Calu3 (cell line): ENCODE measurements at regions of chr11 and their contacts with region 1.

Region 1: GRCh38 chr11:61129639-61130523 is 27.6 kb downstream of the CD5 start:
- DNase-seq: peak; percentile 95
- H3K4me3 Mint-ChIP-seq: peak overlapping the region; percentile 27
- H3K27ac Mint-ChIP-seq: peak overlapping the region; percentile 29
- H3K4me1 Mint-ChIP-seq: peaks cover 9% of the 10 kb centered on the region
- H3K27me3 Mint-ChIP-seq: peaks cover 10% of the 10 kb centered on the region
- CTCF ChIP-seq: peak; percentile 99

Region 2: DNA sequence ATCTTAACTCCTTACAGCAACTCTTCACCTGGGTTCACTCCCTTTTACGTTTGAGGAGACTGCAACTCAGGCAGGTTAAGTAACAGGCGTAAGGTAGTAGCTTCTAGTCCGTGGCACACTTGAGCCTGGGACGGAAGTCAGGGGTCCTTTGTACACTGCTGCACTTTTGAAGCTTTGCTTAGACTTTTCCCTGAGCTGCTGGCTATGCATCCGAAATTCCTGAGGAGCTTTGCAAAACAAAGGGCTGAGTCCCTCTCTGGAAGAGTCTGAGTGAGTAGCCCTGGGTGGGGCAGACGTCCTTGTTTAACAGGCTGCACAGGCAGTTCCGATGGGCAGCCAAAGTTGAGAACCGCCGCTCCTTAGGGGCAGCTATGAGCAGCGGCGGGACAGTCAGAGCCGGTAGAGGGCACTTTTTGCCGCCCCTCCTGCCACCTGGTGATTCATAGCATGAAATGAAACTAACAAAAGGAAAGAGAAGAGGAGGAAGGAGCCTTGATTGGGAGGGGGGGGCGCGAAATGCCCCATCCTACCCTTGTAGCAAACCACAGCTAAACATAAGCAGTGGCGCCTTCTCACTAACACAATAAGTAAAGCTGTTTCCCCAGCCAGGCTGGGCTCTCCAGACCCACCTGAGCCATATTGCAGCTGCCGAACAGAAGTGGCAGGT is 214.5 kb before region 1 on chr11:
- CTCF ChIA-PET with region 1: no interaction called
- intact Hi-C with region 1: loop called (anchors 5 kb)
- DNase-seq: peak; percentile 79
- H3K4me3 Mint-ChIP-seq: peak overlapping the region; percentile 97
- H3K27ac Mint-ChIP-seq: peak overlapping the region; percentile 30
- H3K4me1 Mint-ChIP-seq: peaks cover 23% of the 10 kb centered on the region
- H3K27me3 Mint-ChIP-seq: peaks cover 23% of the 10 kb centered on the region
- CTCF ChIP-seq: no peak

Region 3: DNA sequence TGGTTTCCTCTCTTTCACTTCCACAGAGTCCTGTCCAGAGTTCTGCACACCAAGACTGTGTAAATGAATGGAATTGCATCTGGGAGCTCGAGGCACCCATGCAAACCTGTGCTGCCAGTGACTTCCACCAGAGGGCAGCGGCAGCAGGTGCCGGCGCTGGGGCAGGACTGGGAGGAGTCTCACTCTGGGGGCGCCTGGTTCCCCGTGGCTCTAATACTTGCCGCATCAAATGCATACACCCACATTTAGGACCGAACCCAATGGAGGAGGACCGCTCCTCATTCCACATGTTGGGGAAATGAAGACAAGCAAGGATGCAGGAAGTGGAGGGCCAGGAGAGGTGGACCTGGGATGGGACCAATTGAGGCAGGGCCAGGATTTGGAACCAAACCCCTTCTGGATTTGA is 159.5 kb before region 1 on chr11:
- CTCF ChIA-PET with region 1: interaction called, 6 read pairs
- intact Hi-C with region 1: loop called (anchors 2 kb)
- DNase-seq: peak; percentile 74
- H3K4me3 Mint-ChIP-seq: no peak overlapping the region
- H3K27ac Mint-ChIP-seq: no peak overlapping the region
- H3K4me1 Mint-ChIP-seq: no peaks in the 10 kb centered on the region
- H3K27me3 Mint-ChIP-seq: peaks cover 55% of the 10 kb centered on the region
- CTCF ChIP-seq: peak; percentile 84

Region 4: GRCh38 chr11:61173456-61173855 is 43.6 kb after region 1 on chr11:
- CTCF ChIA-PET with region 1: no interaction called
- intact Hi-C with region 1: loop called (anchors 1 kb)
- DNase-seq: peak; percentile 36
- H3K4me3 Mint-ChIP-seq: no peak overlapping the region
- H3K27ac Mint-ChIP-seq: no peak overlapping the region
- H3K4me1 Mint-ChIP-seq: peaks cover 16% of the 10 kb centered on the region
- H3K27me3 Mint-ChIP-seq: peaks cover 55% of the 10 kb centered on the region
- CTCF ChIP-seq: no peak

Region 5: DNA sequence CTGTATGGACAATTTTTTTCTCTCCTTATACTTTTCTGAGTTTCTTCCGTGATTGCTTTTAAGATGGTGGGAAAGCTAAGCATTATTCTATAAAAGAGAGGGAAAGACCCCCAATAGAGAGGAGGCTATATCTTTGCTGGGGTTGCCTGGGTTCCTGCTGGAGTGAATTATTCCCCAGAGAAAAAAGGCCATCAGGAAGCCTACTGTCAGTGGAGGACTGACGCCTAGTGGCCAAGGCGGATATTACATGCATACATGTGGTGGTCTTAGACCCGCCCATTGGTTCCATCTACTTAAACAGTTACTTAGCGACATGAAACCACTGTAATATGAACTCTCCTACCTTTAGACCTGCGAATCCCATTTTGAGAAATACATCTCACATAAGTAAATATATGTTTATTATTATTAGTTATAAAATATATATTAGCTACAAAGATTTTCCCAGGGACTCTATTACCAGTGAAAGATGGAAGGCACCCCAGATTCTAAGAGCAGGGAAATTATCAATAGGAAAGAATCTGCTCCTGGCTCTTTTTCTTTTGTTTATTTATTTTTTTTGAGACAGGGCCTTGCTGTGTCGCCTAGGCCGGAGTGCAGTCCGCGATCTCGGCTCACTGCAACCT is 57.7 kb after region 1 on chr11:
- CTCF ChIA-PET with region 1: no interaction called
- intact Hi-C with region 1: loop called (anchors 1 kb)
- DNase-seq: peak; percentile 78
- H3K4me3 Mint-ChIP-seq: no peak overlapping the region
- H3K27ac Mint-ChIP-seq: no peak overlapping the region
- H3K4me1 Mint-ChIP-seq: no peaks in the 10 kb centered on the region
- H3K27me3 Mint-ChIP-seq: peaks cover 14% of the 10 kb centered on the region
- CTCF ChIP-seq: peak; percentile 91

Region 6: GRCh38 chr11:61532139-61533038 is 402.5 kb after region 1 on chr11:
- CTCF ChIA-PET with region 1: no interaction called
- intact Hi-C with region 1: no loop called
- DNase-seq: peak; percentile 63
- H3K4me3 Mint-ChIP-seq: no peak overlapping the region
- H3K27ac Mint-ChIP-seq: no peak overlapping the region
- H3K4me1 Mint-ChIP-seq: peaks cover 13% of the 10 kb centered on the region
- H3K27me3 Mint-ChIP-seq: peaks cover 55% of the 10 kb centered on the region
- CTCF ChIP-seq: peak; percentile 92